ENCODE measurements at regions of chr9 and their contacts with region 1.

Region 1: GRCh38 chr9:97982683-97983588 is at the start of gene ANP32B:
- DNase-seq: no peak
- H3K4me3 ChIP-seq: peak within 1 kb of the TSS; percentile 96 to 98
- H3K27ac ChIP-seq: peak within 1 kb of the TSS; percentile 100
- H3K4me1 ChIP-seq: peaks cover 58% of the 10 kb centered on the region
- H3K27me3 ChIP-seq: no peaks in the 10 kb centered on the region
- CTCF ChIP-seq: peak; percentile 46 to 79 (median 64)
- POLR2A ChIP-seq: peak in 1 of 2 donors; percentile 26
- total RNA-seq, gene ANP32B: 75.1 TPM

Region 2: DNA sequence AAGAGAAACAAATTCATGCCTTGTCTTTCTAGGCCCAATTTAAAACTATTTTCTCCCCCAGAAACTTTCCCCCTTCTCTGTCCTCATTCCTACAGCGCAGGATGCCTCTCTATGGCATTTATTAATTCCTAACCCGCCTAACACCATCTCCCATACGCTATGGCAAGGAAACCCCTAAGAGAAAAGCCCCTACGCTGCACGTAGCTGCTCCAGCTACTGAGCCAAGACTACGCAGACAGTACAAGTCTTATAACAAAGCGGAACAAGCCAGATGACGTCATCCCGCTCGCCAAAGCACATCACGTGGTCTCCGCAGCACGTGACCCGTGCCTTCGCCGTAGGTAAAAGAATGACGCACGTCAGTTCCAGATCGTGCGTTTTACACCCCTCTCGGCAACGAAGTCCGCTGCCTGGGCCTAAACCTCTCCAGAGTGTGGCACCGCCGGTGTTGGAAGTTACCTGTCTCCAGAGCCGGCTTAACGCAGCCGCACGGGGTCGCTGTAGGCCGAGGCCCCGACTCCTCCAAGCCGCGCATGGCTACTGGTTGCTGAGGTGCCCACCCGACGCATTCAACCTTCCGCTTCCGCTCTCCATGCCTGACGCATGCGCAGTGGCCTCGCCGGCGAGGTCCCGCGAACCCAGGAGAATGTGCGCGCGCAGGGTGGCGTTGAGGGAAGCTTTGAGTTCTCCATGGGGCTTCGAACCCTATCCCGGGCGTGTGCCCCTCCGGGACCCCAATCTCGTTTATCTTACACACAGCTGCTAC is 60.8 kb before region 1 on chr9 and contains the start of gene TRMO:
- intact Hi-C with region 1: loop called (anchors 10 kb)
- DNase-seq: peak; percentile 97 to 99
- H3K4me3 ChIP-seq: peak within 1 kb of the TSS; percentile 46 to 57
- H3K27ac ChIP-seq: peak within 1 kb of the TSS; percentile 89
- H3K4me1 ChIP-seq: peaks cover 33% of the 10 kb centered on the region
- H3K27me3 ChIP-seq: no peaks in the 10 kb centered on the region
- CTCF ChIP-seq: peak in 2 of 3 experiments; percentile 68 to 92
- POLR2A ChIP-seq: peak in 1 of 2 donors; percentile 90
- total RNA-seq, gene TRMO: 27.7 TPM

Region 3: DNA sequence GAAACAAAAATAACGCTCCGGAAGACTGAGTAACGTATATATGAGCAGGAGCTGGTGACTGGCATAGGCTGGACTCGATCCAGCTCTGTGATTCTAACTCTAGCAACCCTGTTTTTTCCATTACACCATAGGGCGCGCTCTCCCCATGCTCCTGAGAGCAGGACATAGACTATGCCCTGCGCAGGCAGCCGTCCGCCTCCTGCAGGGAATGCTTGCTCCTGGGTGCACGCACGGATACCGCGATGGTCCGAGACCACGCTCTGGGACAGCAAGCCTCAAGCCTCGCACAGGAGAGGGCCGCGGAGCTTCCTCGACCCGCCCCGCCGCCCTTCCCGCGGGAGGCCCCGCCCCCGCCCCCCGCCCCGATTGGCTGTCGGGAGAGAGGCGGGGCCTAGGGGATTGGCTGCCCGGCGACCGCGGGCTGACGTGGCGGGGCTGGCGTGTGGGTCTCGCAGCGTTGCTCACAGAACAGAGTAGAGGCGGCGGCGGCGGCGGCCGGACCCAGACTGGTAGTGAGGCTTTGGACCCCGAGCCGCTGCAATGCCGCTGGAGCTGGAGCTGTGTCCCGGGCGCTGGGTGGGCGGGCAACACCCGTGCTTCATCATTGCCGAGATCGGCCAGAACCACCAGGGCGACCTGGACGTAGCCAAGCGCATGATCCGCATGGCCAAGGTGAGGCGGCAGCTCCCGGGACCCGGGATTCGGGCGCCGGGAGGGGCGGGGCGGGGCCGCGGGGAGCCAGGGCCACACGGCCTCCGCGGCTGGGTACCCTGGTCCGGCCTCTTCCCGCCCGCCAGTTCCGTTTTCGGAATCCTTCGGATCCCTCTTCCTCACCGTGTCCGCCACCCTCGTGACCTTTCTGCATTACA is 73.6 kb after region 1 on chr9 and contains the start of gene NANS:
- intact Hi-C with region 1: loop called (anchors 5 kb)
- DNase-seq: peak in 1 of 2 donors; percentile 95
- H3K4me3 ChIP-seq: peak within 1 kb of the TSS; percentile 65 to 87
- H3K27ac ChIP-seq: peak within 1 kb of the TSS; percentile 92
- H3K4me1 ChIP-seq: peaks cover 23% of the 10 kb centered on the region
- H3K27me3 ChIP-seq: no peaks in the 10 kb centered on the region
- CTCF ChIP-seq: no peak
- POLR2A ChIP-seq: peak; percentile 58 to 93
- total RNA-seq, gene NANS: 41.7 TPM

Region 4: GRCh38 chr9:98087420-98088354 is 104.8 kb after region 1 on chr9:
- intact Hi-C with region 1: no loop called
- DNase-seq: no peak
- H3K4me3 ChIP-seq: peak overlapping the region; percentile 39 to 41
- H3K27ac ChIP-seq: peak overlapping the region; percentile 69
- H3K4me1 ChIP-seq: peaks cover 9% of the 10 kb centered on the region
- H3K27me3 ChIP-seq: no peaks in the 10 kb centered on the region
- CTCF ChIP-seq: no peak
- POLR2A ChIP-seq: no peak

Measured in vagina (tissue), 2 donors.